Transverse colon (tissue), 4 donors: ENCODE measurements at regions of chr6 and their contacts with region 1.

Region 1: DNA sequence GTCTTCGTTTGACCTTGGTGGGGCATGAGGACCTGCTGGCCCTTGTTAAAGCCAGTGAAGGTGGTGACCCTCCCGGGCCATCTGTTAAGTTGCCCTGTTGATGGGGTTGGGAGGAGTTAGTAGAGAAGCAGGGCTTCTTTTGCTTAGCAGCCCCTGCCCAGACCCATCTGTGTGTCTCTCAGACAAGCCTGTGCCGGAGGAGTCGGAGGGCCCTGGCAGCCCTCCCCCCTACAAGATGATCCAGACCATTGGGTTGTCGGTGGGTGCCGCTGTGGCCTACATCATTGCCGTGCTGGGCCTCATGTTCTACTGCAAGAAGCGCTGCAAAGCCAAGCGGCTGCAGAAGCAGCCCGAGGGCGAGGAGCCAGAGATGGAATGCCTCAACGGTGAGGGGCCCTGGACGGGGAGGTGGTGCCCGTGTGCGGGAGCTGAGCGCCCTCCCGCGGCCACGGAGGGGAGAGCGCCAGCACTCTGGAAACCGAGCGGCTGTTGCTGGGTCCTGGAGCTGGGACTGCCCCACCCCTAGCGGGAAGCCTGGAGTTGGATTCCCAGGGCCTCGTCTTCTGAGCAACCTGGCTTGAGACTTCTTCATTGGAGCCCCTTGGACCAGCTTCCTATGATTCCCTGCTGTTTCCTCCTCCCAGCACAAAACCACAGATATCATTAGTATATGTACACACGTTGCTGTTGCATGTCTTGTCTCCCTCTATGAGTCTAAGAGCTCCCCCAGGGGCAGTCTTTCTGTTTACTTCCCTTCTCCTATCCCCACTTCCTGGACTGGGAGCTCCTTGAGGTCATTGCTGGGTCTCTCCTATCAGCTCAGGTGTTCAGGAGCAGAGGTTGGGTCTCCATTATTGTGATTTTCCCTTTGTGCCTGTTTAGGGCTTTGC is 27.6 kb upstream of the SRF start:
- DNase-seq: peak; percentile 86
- H3K4me3 ChIP-seq: no peak overlapping the region
- H3K27ac ChIP-seq: peak overlapping the region in 2 of 4 donors; percentile 20 to 51
- H3K4me1 ChIP-seq: peaks cover 5 to 11% (median 9%) of the 10 kb centered on the region in 4 donors
- H3K27me3 ChIP-seq: no peaks in the 10 kb centered on the region
- CTCF ChIP-seq: peak; percentile 86 to 95 (median 92)
- EP300 ChIP-seq: no peak
- POLR2A ChIP-seq: no peak

Region 2: GRCh38 chr6:42901536-42901957 is 241.9 kb before region 1 on chr6:
- in situ Hi-C with region 1: loop called (anchors 5 to 10 kb)
- intact Hi-C with region 1: loop called (anchors 5 kb)
- DNase-seq: peak; percentile 76
- H3K4me3 ChIP-seq: no peak overlapping the region
- H3K27ac ChIP-seq: no peak overlapping the region
- H3K4me1 ChIP-seq: peaks cover 0 to 13% (median 4%) of the 10 kb centered on the region in 4 donors
- H3K27me3 ChIP-seq: no peaks in the 10 kb centered on the region
- CTCF ChIP-seq: peak; percentile 87 to 95 (median 90)
- EP300 ChIP-seq: no peak
- POLR2A ChIP-seq: no peak

Region 3: GRCh38 chr6:42907336-42907735 is 236.1 kb before region 1 on chr6:
- in situ Hi-C with region 1: loop called (anchors 5 to 10 kb)
- intact Hi-C with region 1: loop called (anchors 5 kb)
- DNase-seq: no peak
- H3K4me3 ChIP-seq: no peak overlapping the region
- H3K27ac ChIP-seq: no peak overlapping the region
- H3K4me1 ChIP-seq: peaks cover 0 to 8% (median 4%) of the 10 kb centered on the region in 4 donors
- H3K27me3 ChIP-seq: peaks cover 12% of the 10 kb centered on the region
- CTCF ChIP-seq: no peak
- EP300 ChIP-seq: no peak
- POLR2A ChIP-seq: no peak

Region 4: GRCh38 chr6:43075670-43076463 is 67.6 kb before region 1 on chr6 and contains the start of gene PTK7:
- in situ Hi-C with region 1: no loop called
- intact Hi-C with region 1: loop called (anchors 5 kb)
- DNase-seq: no peak
- H3K4me3 ChIP-seq: peak within 1 kb of the TSS; percentile 25 to 60 (median 46)
- H3K27ac ChIP-seq: peak within 1 kb of the TSS; percentile 48 to 69 (median 49)
- H3K4me1 ChIP-seq: peaks cover 0 to 17% (median 10%) of the 10 kb centered on the region in 4 donors
- H3K27me3 ChIP-seq: peaks cover 13% of the 10 kb centered on the region
- CTCF ChIP-seq: no peak
- EP300 ChIP-seq: no peak
- POLR2A ChIP-seq: no peak
- total RNA-seq, gene PTK7: 2.2 to 34.6 (median 6.0) TPM

Region 5: GRCh38 chr6:43242908-43243663 is 99.6 kb after region 1 on chr6 and contains the start of gene TTBK1:
- in situ Hi-C with region 1: no loop called
- intact Hi-C with region 1: no loop called
- DNase-seq: no peak
- H3K4me3 ChIP-seq: no peak within 1 kb of the TSS
- H3K27ac ChIP-seq: no peak within 1 kb of the TSS
- H3K4me1 ChIP-seq: peaks cover 3 to 13% (median 6%) of the 10 kb centered on the region in 4 donors
- H3K27me3 ChIP-seq: peaks cover 80% of the 10 kb centered on the region
- CTCF ChIP-seq: no peak
- EP300 ChIP-seq: no peak
- POLR2A ChIP-seq: no peak
- total RNA-seq, gene TTBK1: 0.20 to 1.1 (median 0.36) TPM

Region 6: GRCh38 chr6:43851204-43851865 is 707.9 kb after region 1 on chr6:
- in situ Hi-C with region 1: no loop called
- intact Hi-C with region 1: no loop called
- DNase-seq: no peak
- H3K4me3 ChIP-seq: no peak overlapping the region
- H3K27ac ChIP-seq: no peak overlapping the region
- H3K4me1 ChIP-seq: no peaks in the 10 kb centered on the region
- H3K27me3 ChIP-seq: no peaks in the 10 kb centered on the region
- CTCF ChIP-seq: no peak
- EP300 ChIP-seq: no peak
- POLR2A ChIP-seq: no peak